A673 (cell line): ENCODE measurements at regions of chr19 and their contacts with region 1.

Region 1: GRCh38 chr19:45717166-45717982 is 13.3 kb downstream of the FBXO46 start:
- DNase-seq: peak; percentile 99
- H3K4me3 ChIP-seq: peak overlapping the region; percentile 63
- H3K27ac ChIP-seq: peak overlapping the region; percentile 98
- H3K4me1 ChIP-seq: peaks cover 8% of the 10 kb centered on the region
- H3K27me3 ChIP-seq: no peaks in the 10 kb centered on the region
- CTCF ChIP-seq: peak; percentile 27; the same call in 1 of the 2 replicates

Region 2: GRCh38 chr19:45037393-45038169 is 679.8 kb before region 1 on chr19:
- CTCF ChIA-PET with region 1: no interaction called
- POLR2A ChIA-PET with region 1: no interaction called
- intact Hi-C with region 1: no loop called
- DNase-seq: no peak
- H3K4me3 ChIP-seq: no peak overlapping the region
- H3K27ac ChIP-seq: no peak overlapping the region
- H3K4me1 ChIP-seq: peaks cover 9% of the 10 kb centered on the region
- H3K27me3 ChIP-seq: no peaks in the 10 kb centered on the region
- CTCF ChIP-seq: no peak

Region 3: DNA sequence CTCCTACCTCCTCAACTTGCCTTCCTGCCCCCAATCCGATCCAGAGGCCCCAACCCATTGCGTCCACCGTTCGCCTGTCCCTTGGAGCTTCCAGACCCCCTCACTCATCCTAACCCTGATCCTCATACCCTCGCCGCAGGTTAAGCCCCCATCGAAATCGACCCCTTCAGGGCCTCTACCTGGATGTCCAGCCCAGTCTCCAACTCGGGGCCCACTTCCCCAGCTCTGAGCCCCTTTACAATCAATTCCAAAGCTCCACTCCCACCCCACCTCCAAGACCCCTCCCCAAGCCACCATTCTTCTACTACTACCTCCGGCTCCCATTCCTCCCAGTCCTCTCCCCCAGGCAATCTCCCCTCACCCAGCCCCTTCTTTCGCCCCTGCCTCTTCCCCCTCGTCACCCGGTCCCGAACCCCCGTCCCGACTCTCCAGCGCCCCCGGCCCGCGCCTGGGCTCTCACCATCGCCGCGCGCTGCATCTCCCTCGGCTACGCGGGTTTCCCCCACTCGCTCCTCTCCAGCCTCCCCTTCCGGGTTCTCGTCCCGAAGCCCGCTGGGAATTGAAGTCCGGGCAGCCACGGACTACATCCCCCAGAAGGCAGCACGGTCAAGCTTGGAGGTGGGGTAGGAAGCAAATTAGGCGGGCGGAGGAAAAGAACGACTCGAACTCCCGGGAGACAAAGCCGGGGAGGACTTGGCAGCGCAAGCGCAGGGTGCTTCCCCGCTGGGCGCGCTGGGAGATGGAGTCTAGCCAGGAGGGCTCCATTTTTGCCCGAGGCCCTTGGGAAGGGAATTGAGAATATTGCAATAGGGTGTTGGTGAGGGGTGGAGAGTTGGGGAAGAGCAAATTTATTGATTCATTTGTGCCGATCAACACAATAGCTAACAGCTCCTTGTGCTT is 13.3 kb after region 1 on chr19 and contains the start of gene FBXO46:
- CTCF ChIA-PET with region 1: no interaction called
- POLR2A ChIA-PET with region 1: interaction called, 14 read pairs
- intact Hi-C with region 1: no loop called
- DNase-seq: peak; percentile 100
- H3K4me3 ChIP-seq: peak within 1 kb of the TSS; percentile 79
- H3K27ac ChIP-seq: peak within 1 kb of the TSS; percentile 77
- H3K4me1 ChIP-seq: peaks cover 16% of the 10 kb centered on the region
- H3K27me3 ChIP-seq: no peaks in the 10 kb centered on the region
- CTCF ChIP-seq: no peak; the same call in 1 of the 2 replicates
- total RNA-seq, gene FBXO46: 18.8 and 24.3 TPM in 2 replicates

Region 4: GRCh38 chr19:45763691-45764294 is 46.4 kb after region 1 on chr19:
- CTCF ChIA-PET with region 1: no interaction called
- POLR2A ChIA-PET with region 1: interaction called, 25 read pairs
- intact Hi-C with region 1: no loop called
- DNase-seq: no peak
- H3K4me3 ChIP-seq: no peak overlapping the region
- H3K27ac ChIP-seq: no peak overlapping the region
- H3K4me1 ChIP-seq: peaks cover 18% of the 10 kb centered on the region
- H3K27me3 ChIP-seq: no peaks in the 10 kb centered on the region
- CTCF ChIP-seq: no peak

Region 5: GRCh38 chr19:45779231-45780145 is 62.1 kb after region 1 on chr19:
- CTCF ChIA-PET with region 1: no interaction called
- POLR2A ChIA-PET with region 1: no interaction called
- intact Hi-C with region 1: no loop called
- DNase-seq: peak; percentile 91
- H3K4me3 ChIP-seq: peak overlapping the region; percentile 40
- H3K27ac ChIP-seq: no peak overlapping the region
- H3K4me1 ChIP-seq: no peaks in the 10 kb centered on the region
- H3K27me3 ChIP-seq: no peaks in the 10 kb centered on the region
- CTCF ChIP-seq: peak; percentile 80

Region 6: GRCh38 chr19:45922281-45922680 is 204.9 kb after region 1 on chr19:
- CTCF ChIA-PET with region 1: no interaction called
- POLR2A ChIA-PET with region 1: no interaction called
- intact Hi-C with region 1: no loop called
- DNase-seq: no peak
- H3K4me3 ChIP-seq: no peak overlapping the region
- H3K27ac ChIP-seq: no peak overlapping the region
- H3K4me1 ChIP-seq: no peaks in the 10 kb centered on the region
- H3K27me3 ChIP-seq: peaks cover 24% of the 10 kb centered on the region
- CTCF ChIP-seq: 0 out of 2 replicates have a peak, but pooled peaks have one; percentile 22